ENCODE measurements at regions of chr11 and their contacts with region 1.

Region 1: GRCh38 chr11:95435628-95436353 is 204.8 kb upstream of the SESN3 start:
- DNase-seq: no peak
- ATAC-seq: no peak
- H3K4me3 ChIP-seq: no peak overlapping the region
- H3K27ac ChIP-seq: no peak overlapping the region
- H3K4me1 ChIP-seq: no peaks in the 10 kb centered on the region
- H3K27me3 ChIP-seq: no peaks in the 10 kb centered on the region
- CTCF ChIP-seq: no peak

Region 2: DNA sequence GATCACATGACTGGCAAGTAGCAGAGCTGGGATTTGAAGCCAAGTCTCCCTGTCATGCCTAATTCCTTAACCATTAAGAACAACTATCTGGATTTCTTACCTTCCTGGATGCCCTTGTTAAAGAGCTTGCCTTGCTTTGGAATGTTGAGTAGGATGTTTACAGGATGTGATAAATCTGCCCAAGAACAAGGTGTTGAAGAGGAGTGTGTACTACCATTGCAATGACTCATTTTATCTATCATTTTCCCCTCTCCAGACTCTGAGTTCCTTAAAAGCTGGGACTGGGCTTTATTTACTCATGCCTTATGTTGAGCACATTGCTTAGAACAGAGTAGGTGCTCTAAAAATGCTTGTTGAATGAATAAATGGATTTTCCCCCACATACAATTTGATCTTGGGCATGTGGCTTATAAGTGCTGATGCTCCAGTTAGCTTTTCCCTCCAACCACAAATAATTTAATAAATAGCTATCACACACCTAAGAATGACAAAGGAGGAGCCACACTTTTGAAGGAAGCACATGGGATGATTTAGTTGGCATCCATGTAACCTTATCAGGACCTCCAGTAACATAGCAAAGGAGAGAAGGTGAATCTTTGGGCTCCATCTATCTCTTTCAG is 63.8 kb after region 1 on chr11:
- intact Hi-C with region 1: loop called in 1 of 2 experiments (anchors 10 kb)
- DNase-seq: no peak
- ATAC-seq: no peak
- H3K4me3 ChIP-seq: no peak overlapping the region
- H3K27ac ChIP-seq: no peak overlapping the region
- H3K4me1 ChIP-seq: no peaks in the 10 kb centered on the region
- H3K27me3 ChIP-seq: no peaks in the 10 kb centered on the region
- CTCF ChIP-seq: no peak